Caco-2 (cell line): ENCODE measurements at regions of chr12 and their contacts with region 1.

Region 1: DNA sequence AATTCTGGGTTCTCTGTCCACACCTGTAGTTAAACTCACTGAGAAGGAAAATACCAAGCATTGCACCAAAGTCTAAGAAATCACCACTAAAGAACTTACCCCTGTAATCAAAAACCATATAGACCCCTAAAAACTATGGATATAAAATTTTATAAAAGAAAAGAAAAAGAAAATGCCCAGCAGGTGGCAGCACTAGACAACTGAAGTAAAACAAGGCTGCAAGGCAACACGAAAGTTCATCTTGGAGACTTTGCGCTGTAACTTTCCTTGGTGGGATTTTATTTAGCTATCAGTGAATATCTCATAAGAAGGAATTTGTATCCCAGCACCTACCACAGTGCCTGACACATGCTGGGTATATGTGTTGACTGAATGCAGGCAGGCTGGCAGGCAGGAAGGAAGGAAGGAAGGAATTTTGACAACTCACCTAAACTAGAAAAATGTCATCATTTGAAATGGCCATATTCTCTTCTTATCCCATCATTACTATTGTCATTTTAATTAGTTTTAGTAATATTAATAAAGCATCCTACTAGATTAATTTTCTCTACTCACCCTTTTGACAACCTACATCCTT is 68.2 kb upstream of the ETV6 start:
- DNase-seq: peak; percentile 59 to 76
- H3K4me3 ChIP-seq: no peak overlapping the region
- H3K4me3 Mint-ChIP-seq: no peak overlapping the region
- H3K27ac Mint-ChIP-seq: no peak overlapping the region
- H3K4me1 ChIP-seq: no peaks in the 10 kb centered on the region
- H3K4me1 Mint-ChIP-seq: no peaks in the 10 kb centered on the region
- H3K27me3 ChIP-seq: no peaks in the 10 kb centered on the region
- H3K27me3 Mint-ChIP-seq: peaks cover 12% of the 10 kb centered on the region
- CTCF ChIP-seq: peak; percentile 66 to 94

Region 2: DNA sequence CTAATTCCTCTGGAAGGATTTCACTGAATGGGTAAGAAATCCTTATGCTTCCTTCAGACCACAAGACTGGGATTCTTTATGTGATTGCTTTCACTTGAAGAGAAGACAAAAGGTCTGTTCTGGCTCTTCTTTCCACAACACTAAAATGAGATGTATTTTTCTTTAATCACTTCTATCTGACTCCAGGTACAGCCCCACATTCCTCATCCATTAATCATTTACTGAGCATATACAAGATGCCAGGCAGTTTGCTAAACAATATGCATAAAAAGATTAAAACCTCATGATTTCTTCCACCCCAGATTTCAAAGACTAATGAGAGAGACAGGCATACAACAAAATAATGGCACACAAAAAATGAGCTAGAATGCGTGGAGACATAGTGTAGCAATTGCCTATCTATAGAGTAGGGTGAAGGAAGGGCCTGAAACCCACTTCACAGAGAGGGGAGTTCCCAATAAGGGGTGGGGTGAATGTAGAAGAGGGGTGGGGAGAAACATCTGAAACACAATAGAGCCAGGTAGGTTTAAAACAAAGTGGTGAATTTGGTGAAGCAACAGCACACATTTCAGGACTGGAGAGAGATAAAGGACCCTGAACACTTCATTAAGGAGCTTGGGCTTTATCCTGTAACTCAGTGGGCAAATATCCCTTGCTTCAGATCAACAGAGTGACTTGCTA is 120.8 kb before region 1 on chr12:
- CTCF ChIA-PET with region 1: no interaction called
- POLR2A ChIA-PET with region 1: no interaction called
- intact Hi-C with region 1: no loop called
- DNase-seq: no peak
- H3K4me3 ChIP-seq: no peak overlapping the region
- H3K4me3 Mint-ChIP-seq: no peak overlapping the region
- H3K27ac Mint-ChIP-seq: no peak overlapping the region
- H3K4me1 ChIP-seq: no peaks in the 10 kb centered on the region
- H3K4me1 Mint-ChIP-seq: peaks cover 6% of the 10 kb centered on the region
- H3K27me3 ChIP-seq: no peaks in the 10 kb centered on the region
- H3K27me3 Mint-ChIP-seq: peaks cover 9% of the 10 kb centered on the region
- CTCF ChIP-seq: no peak

Region 3: GRCh38 chr12:11607313-11608081 is 26.2 kb after region 1 on chr12:
- CTCF ChIA-PET with region 1: no interaction called
- POLR2A ChIA-PET with region 1: no interaction called
- intact Hi-C with region 1: no loop called
- DNase-seq: peak; percentile 85 to 86
- H3K4me3 ChIP-seq: no peak overlapping the region
- H3K4me3 Mint-ChIP-seq: peak overlapping the region; percentile 56
- H3K27ac Mint-ChIP-seq: peak overlapping the region; percentile 3
- H3K4me1 ChIP-seq: peaks cover 17% of the 10 kb centered on the region
- H3K4me1 Mint-ChIP-seq: peaks cover 19% of the 10 kb centered on the region
- H3K27me3 ChIP-seq: no peaks in the 10 kb centered on the region
- H3K27me3 Mint-ChIP-seq: no peaks in the 10 kb centered on the region
- CTCF ChIP-seq: no peak

Region 4: DNA sequence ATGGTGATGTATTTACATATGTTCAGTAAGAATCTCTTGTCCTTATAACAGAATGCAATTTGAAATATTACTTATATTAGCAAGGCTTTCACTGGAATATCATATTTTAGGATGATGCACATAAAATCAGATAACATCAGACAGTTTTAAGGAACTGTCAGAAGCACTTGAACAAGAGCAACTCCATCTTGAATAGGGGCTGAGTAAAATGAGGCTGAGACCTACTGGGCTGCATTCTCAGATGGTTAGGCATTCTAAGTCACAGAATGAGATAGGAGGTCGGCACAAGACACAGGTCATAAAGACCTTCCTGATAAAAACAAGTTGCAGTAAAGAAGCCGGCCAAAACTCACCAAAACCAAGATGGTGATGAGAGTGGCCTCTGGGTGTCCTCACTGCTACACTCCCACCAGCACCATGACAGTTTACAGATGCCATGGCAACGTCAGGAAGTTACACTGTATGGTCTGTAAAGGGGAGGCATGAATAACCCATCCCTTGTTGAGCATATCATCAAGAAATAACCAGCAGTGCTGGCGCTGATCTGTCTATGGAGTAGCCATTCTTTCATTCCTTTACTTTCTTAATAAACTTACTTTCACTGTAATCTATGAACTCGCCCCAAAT is 40.6 kb after region 1 on chr12:
- CTCF ChIA-PET with region 1: interaction called, 7 read pairs
- POLR2A ChIA-PET with region 1: no interaction called
- intact Hi-C with region 1: loop called (anchors 1 kb)
- DNase-seq: peak; percentile 29 to 45
- H3K4me3 ChIP-seq: no peak overlapping the region
- H3K4me3 Mint-ChIP-seq: no peak overlapping the region
- H3K27ac Mint-ChIP-seq: peak overlapping the region; percentile 80
- H3K4me1 ChIP-seq: peaks cover 19% of the 10 kb centered on the region
- H3K4me1 Mint-ChIP-seq: peaks cover 26% of the 10 kb centered on the region
- H3K27me3 ChIP-seq: no peaks in the 10 kb centered on the region
- H3K27me3 Mint-ChIP-seq: no peaks in the 10 kb centered on the region
- CTCF ChIP-seq: peak in 1 of 2 experiments; percentile 35

Region 5: GRCh38 chr12:11648831-11649702 is 67.8 kb after region 1 on chr12 and contains the start of gene ETV6:
- CTCF ChIA-PET with region 1: no interaction called
- POLR2A ChIA-PET with region 1: no interaction called
- intact Hi-C with region 1: loop called (anchors 2 kb)
- DNase-seq: peak; percentile 78 to 85
- H3K4me3 ChIP-seq: peak within 1 kb of the TSS; percentile 79
- H3K4me3 Mint-ChIP-seq: peak within 1 kb of the TSS; percentile 84
- H3K27ac Mint-ChIP-seq: peak within 1 kb of the TSS; percentile 87
- H3K4me1 ChIP-seq: peaks cover 7% of the 10 kb centered on the region; the same call in 1 of the 2 replicates
- H3K4me1 Mint-ChIP-seq: peaks cover 10% of the 10 kb centered on the region
- H3K27me3 ChIP-seq: no peaks in the 10 kb centered on the region
- H3K27me3 Mint-ChIP-seq: no peaks in the 10 kb centered on the region
- CTCF ChIP-seq: no peak
- total RNA-seq, gene ETV6: 15.6 and 18.2 TPM in 2 replicates

Region 6: GRCh38 chr12:11705010-11705409 is 123.7 kb after region 1 on chr12:
- CTCF ChIA-PET with region 1: no interaction called
- POLR2A ChIA-PET with region 1: no interaction called
- intact Hi-C with region 1: loop called (anchors 5 kb)
- DNase-seq: no peak
- H3K4me3 ChIP-seq: no peak overlapping the region
- H3K4me3 Mint-ChIP-seq: no peak overlapping the region
- H3K27ac Mint-ChIP-seq: no peak overlapping the region
- H3K4me1 ChIP-seq: peaks cover 18% of the 10 kb centered on the region
- H3K4me1 Mint-ChIP-seq: peaks cover 18% of the 10 kb centered on the region
- H3K27me3 ChIP-seq: no peaks in the 10 kb centered on the region
- H3K27me3 Mint-ChIP-seq: no peaks in the 10 kb centered on the region
- CTCF ChIP-seq: no peak

Region 7: GRCh38 chr12:11741434-11742092 is 160.3 kb after region 1 on chr12:
- CTCF ChIA-PET with region 1: no interaction called
- POLR2A ChIA-PET with region 1: no interaction called
- intact Hi-C with region 1: no loop called
- DNase-seq: no peak
- H3K4me3 ChIP-seq: no peak overlapping the region
- H3K4me3 Mint-ChIP-seq: no peak overlapping the region
- H3K27ac Mint-ChIP-seq: no peak overlapping the region
- H3K4me1 ChIP-seq: no peaks in the 10 kb centered on the region
- H3K4me1 Mint-ChIP-seq: no peaks in the 10 kb centered on the region
- H3K27me3 ChIP-seq: no peaks in the 10 kb centered on the region
- H3K27me3 Mint-ChIP-seq: no peaks in the 10 kb centered on the region
- CTCF ChIP-seq: no peak

Region 8: GRCh38 chr12:11798856-11799501 is 217.7 kb after region 1 on chr12:
- CTCF ChIA-PET with region 1: no interaction called
- POLR2A ChIA-PET with region 1: no interaction called
- intact Hi-C with region 1: loop called (anchors 5 kb)
- DNase-seq: no peak
- H3K4me3 ChIP-seq: no peak overlapping the region
- H3K4me3 Mint-ChIP-seq: no peak overlapping the region
- H3K27ac Mint-ChIP-seq: no peak overlapping the region
- H3K4me1 ChIP-seq: peaks cover 47% of the 10 kb centered on the region
- H3K4me1 Mint-ChIP-seq: peaks cover 46% of the 10 kb centered on the region
- H3K27me3 ChIP-seq: no peaks in the 10 kb centered on the region
- H3K27me3 Mint-ChIP-seq: no peaks in the 10 kb centered on the region
- CTCF ChIP-seq: no peak

Region 9: DNA sequence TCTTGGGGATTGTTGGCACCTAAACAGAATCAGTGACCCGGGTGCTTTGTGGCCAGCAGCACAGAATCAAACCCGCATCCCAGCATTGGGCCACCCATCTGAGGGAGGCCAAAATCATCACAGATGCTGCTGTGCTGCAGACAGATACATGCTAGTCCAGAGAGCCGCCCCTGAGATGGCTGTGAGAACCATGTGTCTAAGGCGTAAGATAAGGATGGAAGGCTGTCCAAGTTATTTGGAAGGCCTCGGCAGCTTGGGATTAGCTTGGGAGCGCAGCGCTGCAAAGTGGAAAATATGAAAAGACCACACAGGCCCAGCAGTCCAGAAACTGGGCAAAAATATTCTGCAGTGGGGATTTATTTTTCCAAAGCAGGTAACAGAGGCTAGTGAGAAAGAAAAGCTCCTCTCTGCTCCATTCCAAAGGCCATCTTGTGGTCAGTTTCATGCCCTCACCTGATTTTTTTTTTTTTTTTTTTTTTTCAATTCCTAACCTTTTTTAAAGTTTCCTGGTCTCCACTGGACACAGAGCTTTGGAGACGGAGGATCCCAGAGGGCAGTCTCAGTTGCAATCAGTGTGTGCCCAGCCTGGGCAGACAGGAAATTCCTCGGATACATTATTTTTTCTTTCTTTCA is 310.6 kb after region 1 on chr12:
- CTCF ChIA-PET with region 1: interaction called, 7 read pairs
- POLR2A ChIA-PET with region 1: no interaction called
- intact Hi-C with region 1: loop called (anchors 2 kb)
- DNase-seq: no peak
- H3K4me3 ChIP-seq: no peak overlapping the region
- H3K4me3 Mint-ChIP-seq: no peak overlapping the region
- H3K27ac Mint-ChIP-seq: no peak overlapping the region
- H3K4me1 ChIP-seq: peaks cover 5% of the 10 kb centered on the region
- H3K4me1 Mint-ChIP-seq: peaks cover 3% of the 10 kb centered on the region
- H3K27me3 ChIP-seq: no peaks in the 10 kb centered on the region
- H3K27me3 Mint-ChIP-seq: no peaks in the 10 kb centered on the region
- CTCF ChIP-seq: peak; percentile 49 to 66